ENCODE measurements at regions of chr1 and their contacts with region 1.

Region 1: GRCh38 chr1:113978863-113979702 is at the start of gene OLFML3:
- DNase-seq: peak; percentile 73 to 91 (median 76)
- ATAC-seq: peak; percentile 90
- H3K4me3 ChIP-seq: no peak within 1 kb of the TSS
- H3K27ac ChIP-seq: no peak within 1 kb of the TSS
- H3K4me1 ChIP-seq: peaks cover 5 to 8% of the 10 kb centered on the region in 2 experiments; a peak in 2 of 5 replicates
- H3K27me3 ChIP-seq: peaks cover 19 to 42% of the 10 kb centered on the region in 2 experiments; a peak in 4 of 5 replicates
- CTCF ChIP-seq: peak; percentile 78 to 89 (median 79)
- EP300 ChIP-seq: no peak
- POLR2A ChIP-seq: no peak
- RAD21 ChIP-seq: peak; percentile 84 to 92
- polyA plus RNA-seq, gene OLFML3: not detected

Region 2: GRCh38 chr1:113835642-113836307 is 143.3 kb before region 1 on chr1:
- CTCF ChIA-PET with region 1: interaction called, 9 read pairs
- POLR2A ChIA-PET with region 1: no interaction called
- in situ Hi-C with region 1: no loop called
- intact Hi-C with region 1: loop called (anchors 5 kb)
- DNase-seq: peak; percentile 33 to 71 (median 38)
- ATAC-seq: peak; percentile 70
- H3K4me3 ChIP-seq: no peak overlapping the region
- H3K27ac ChIP-seq: no peak overlapping the region
- H3K4me1 ChIP-seq: no peaks in the 10 kb centered on the region
- H3K27me3 ChIP-seq: no peaks in the 10 kb centered on the region
- CTCF ChIP-seq: peak in 2 of 3 experiments; percentile 52 to 83; a peak in 4 of 6 replicates
- EP300 ChIP-seq: no peak
- POLR2A ChIP-seq: no peak
- RAD21 ChIP-seq: peak; percentile 88 to 89

Region 3: DNA sequence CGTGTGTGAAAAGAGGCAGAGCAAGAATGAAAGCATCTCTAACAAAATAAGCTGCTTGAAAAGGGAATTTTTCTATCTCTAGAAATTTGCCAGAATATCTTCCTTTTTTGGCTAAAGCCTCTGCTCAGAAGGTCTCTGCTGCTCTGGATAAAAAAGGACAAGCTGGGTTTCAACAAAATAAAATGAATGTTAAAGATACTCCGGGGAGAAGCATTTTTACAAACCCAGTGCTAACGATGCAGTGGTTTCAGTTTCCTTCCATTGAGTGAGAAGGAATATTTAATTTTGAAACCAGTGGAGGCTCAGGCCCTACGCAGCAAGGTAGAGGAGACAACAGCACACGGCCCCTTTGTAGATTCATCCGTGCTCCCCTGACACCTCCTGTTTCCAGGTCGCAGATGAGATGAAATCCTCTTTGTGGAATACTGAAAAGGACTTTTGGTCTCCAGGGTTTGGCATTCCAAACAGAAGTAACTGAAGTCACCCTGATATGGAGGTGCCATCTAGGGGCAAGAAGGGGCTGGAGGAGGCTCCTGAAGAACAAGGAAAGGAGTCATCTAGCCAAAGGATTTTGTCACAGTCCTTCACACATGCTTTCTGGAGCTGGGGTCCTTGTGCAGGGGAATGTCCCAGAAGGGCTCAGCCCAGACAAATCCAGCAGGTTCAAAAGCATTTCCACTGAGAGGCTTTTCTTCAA is 240.2 kb after region 1 on chr1:
- CTCF ChIA-PET with region 1: no interaction called
- POLR2A ChIA-PET with region 1: no interaction called
- in situ Hi-C with region 1: no loop called
- intact Hi-C with region 1: loop called (anchors 10 kb)
- DNase-seq: peak in 2 of 4 experiments; percentile 12 to 18
- ATAC-seq: no peak
- H3K4me3 ChIP-seq: no peak overlapping the region
- H3K27ac ChIP-seq: no peak overlapping the region
- H3K4me1 ChIP-seq: no peaks in the 10 kb centered on the region
- H3K27me3 ChIP-seq: peaks cover 2 to 18% of the 10 kb centered on the region in 2 experiments; a peak in 4 of 5 replicates
- CTCF ChIP-seq: peak in 2 of 3 experiments; percentile 24 to 42; a peak in 2 of 6 replicates
- EP300 ChIP-seq: no peak
- POLR2A ChIP-seq: no peak
- RAD21 ChIP-seq: peak in 1 of 2 experiments; percentile 44; a peak in 2 of 4 replicates

Region 4: GRCh38 chr1:114282751-114283403 is 303.8 kb after region 1 on chr1:
- CTCF ChIA-PET with region 1: interaction called, 17 read pairs
- POLR2A ChIA-PET with region 1: interaction called, 3 read pairs
- in situ Hi-C with region 1: loop called (anchors 10 kb)
- intact Hi-C with region 1: loop called (anchors 1 kb)
- DNase-seq: peak; percentile 89 to 93 (median 92)
- ATAC-seq: peak; percentile 100
- H3K4me3 ChIP-seq: no peak overlapping the region
- H3K27ac ChIP-seq: no peak overlapping the region
- H3K4me1 ChIP-seq: no peaks in the 10 kb centered on the region
- H3K27me3 ChIP-seq: peaks cover 8 to 13% of the 10 kb centered on the region in 2 experiments; a peak in 3 of 5 replicates
- CTCF ChIP-seq: peak; percentile 90 to 92 (median 90)
- EP300 ChIP-seq: no peak
- POLR2A ChIP-seq: no peak
- RAD21 ChIP-seq: peak; percentile 65 to 90

Region 5: DNA sequence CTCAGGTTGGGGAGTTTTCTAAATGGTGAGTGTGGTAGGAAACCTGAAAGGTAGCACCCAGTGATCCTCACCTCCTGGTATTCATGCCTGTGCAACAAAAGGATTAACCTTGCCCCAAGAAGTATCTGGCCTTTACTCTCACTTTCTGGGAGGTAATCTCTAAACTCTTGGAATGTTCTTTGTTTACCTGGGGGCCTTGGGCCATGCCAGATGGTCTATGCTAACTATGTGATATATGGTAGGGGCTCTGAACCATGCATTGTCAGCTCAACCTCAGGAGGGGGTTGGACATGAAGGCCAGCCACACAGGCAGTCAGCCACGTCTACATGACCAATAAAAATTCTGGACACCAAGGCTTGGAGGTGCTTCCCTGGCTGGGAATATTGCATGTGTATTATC is 556.3 kb after region 1 on chr1:
- CTCF ChIA-PET with region 1: no interaction called
- POLR2A ChIA-PET with region 1: no interaction called
- in situ Hi-C with region 1: no loop called
- intact Hi-C with region 1: no loop called
- DNase-seq: no peak
- ATAC-seq: no peak
- H3K4me3 ChIP-seq: no peak overlapping the region
- H3K27ac ChIP-seq: no peak overlapping the region
- H3K4me1 ChIP-seq: no peaks in the 10 kb centered on the region
- H3K27me3 ChIP-seq: no peaks in the 10 kb centered on the region
- CTCF ChIP-seq: no peak
- EP300 ChIP-seq: no peak
- POLR2A ChIP-seq: no peak
- RAD21 ChIP-seq: no peak

Measured in K562 (cell line).